ENCODE measurements at regions of chr6 and their contacts with region 1.

Region 1: GRCh38 chr6:121521892-121522664 is 86.6 kb downstream of the GJA1 start:
- DNase-seq: peak; percentile 99
- H3K4me3 ChIP-seq: peak overlapping the region in 1 of 3 experiments; percentile 20
- H3K27ac ChIP-seq: peak overlapping the region; percentile 100
- H3K4me1 ChIP-seq: peaks cover 49% of the 10 kb centered on the region
- H3K27me3 ChIP-seq: no peaks in the 10 kb centered on the region
- CTCF ChIP-seq: no peak
- POLR2A ChIP-seq: peak; percentile 82

Region 2: GRCh38 chr6:121436960-121437850 is 84.9 kb before region 1 on chr6:
- CTCF ChIA-PET with region 1: interaction called, 41 read pairs
- POLR2A ChIA-PET with region 1: interaction called, 94 read pairs
- dilution Hi-C with region 1: no loop called
- intact Hi-C with region 1: loop called (anchors 1 kb)
- DNase-seq: peak; percentile 82
- H3K4me3 ChIP-seq: peak overlapping the region; percentile 94 to 100 (median 100)
- H3K27ac ChIP-seq: peak overlapping the region; percentile 99
- H3K4me1 ChIP-seq: peaks cover 31% of the 10 kb centered on the region
- H3K27me3 ChIP-seq: no peaks in the 10 kb centered on the region
- CTCF ChIP-seq: no peak
- POLR2A ChIP-seq: peak; percentile 60

Region 3: DNA sequence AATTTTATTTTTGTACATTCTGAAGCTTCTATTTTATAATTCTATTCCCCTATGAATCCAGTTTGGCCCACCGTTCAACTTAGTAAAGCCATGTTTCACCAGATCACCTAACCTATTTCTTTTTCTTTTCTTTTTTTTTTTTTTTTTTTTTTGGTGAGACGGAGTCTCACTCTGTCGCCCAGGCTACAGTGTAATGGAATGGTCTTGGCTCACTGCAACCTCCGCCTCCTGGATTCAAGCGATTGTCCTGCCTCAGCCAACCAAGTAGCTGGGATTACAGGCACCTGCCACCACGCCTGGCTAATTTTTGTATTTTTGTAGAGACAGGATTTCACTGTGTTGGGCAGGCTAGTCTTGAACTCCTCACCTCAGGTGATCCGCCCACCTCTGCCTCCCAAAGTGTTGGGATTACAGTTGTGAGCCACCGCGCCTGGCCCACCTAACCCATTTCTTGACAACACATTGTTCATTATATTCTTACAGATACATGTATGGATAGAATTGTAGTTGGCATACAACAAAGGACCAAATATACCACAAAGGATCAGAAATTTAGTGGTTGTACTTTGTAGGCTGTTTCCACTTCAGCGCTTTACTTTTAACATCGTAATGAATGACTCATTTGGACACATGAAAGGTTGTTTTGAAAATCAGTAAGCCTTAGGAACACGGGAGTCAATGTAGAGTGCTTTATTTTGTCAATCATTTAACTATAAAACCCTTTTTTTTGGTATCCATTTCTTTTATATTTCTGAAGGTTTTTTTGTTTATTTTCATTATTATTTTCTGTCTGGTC is 23.4 kb before region 1 on chr6:
- CTCF ChIA-PET with region 1: no interaction called
- POLR2A ChIA-PET with region 1: no interaction called
- dilution Hi-C with region 1: no loop called
- intact Hi-C with region 1: no loop called
- DNase-seq: no peak
- H3K4me3 ChIP-seq: no peak overlapping the region
- H3K27ac ChIP-seq: no peak overlapping the region
- H3K4me1 ChIP-seq: peaks cover 3% of the 10 kb centered on the region
- H3K27me3 ChIP-seq: no peaks in the 10 kb centered on the region
- CTCF ChIP-seq: no peak
- POLR2A ChIP-seq: no peak

Region 4: DNA sequence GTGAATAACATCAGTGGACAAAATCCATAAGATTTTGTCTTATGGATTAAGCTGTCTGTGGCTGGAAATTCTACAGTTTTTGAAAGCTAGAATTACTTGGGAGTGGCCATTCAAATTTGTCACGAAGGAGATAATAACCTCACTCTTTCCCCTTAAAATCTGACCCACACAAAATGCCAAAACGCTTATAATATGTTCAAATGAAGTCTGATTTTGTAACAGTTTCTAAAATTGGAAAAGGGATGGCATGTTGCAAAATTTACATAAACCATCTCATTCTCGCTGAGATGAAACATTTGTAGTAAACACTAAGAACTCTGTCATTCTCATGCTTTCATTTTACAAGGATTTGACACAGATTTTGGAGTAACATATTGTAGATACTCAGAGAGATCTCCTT is 26.1 kb after region 1 on chr6:
- CTCF ChIA-PET with region 1: interaction called, 6 read pairs
- POLR2A ChIA-PET with region 1: no interaction called
- dilution Hi-C with region 1: no loop called
- intact Hi-C with region 1: loop called (anchors 1 kb)
- DNase-seq: no peak
- H3K4me3 ChIP-seq: no peak overlapping the region
- H3K27ac ChIP-seq: no peak overlapping the region
- H3K4me1 ChIP-seq: peaks cover 9% of the 10 kb centered on the region
- H3K27me3 ChIP-seq: no peaks in the 10 kb centered on the region
- CTCF ChIP-seq: no peak
- POLR2A ChIP-seq: no peak

Region 5: DNA sequence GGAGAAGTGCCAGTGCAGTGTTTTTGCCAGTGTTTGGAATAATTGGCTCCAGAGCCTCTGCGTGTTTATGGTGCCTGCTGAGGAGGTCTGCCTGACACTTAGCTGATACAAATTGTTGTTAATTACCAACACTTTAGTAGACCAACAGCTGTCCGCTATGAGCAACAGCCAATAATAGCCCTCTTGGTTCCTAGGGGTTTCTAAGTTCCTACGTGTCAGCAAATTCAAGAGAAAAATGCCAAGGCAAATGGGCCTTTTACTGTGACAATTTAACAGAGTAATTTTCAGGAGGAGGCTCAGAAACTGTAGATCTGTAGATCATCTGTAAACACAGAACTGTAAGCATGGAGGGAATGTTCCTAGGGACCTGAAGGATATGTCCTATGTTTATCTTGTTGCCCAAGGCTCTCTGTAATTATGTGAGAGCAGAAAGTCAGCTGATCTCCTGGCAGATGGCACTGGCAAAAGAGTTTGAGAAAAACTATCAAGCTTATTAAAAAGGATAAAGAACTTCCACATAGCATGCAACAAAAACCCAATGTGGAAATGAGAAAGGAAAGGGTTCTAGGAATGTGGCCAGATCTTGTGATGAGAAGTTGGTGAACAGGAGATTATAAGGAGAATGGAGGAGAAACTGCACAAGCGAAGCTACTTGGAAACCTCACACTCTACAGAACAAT is 71.1 kb after region 1 on chr6:
- CTCF ChIA-PET with region 1: no interaction called
- POLR2A ChIA-PET with region 1: no interaction called
- dilution Hi-C with region 1: no loop called
- intact Hi-C with region 1: no loop called
- DNase-seq: no peak
- H3K4me3 ChIP-seq: no peak overlapping the region
- H3K27ac ChIP-seq: no peak overlapping the region
- H3K4me1 ChIP-seq: no peaks in the 10 kb centered on the region
- H3K27me3 ChIP-seq: no peaks in the 10 kb centered on the region
- CTCF ChIP-seq: no peak
- POLR2A ChIP-seq: no peak

Region 6: GRCh38 chr6:121711472-121711871 is 189.4 kb after region 1 on chr6:
- CTCF ChIA-PET with region 1: no interaction called
- POLR2A ChIA-PET with region 1: no interaction called
- dilution Hi-C with region 1: no loop called
- intact Hi-C with region 1: loop called (anchors 1 kb)
- DNase-seq: peak; percentile 90
- H3K4me3 ChIP-seq: no peak overlapping the region
- H3K27ac ChIP-seq: no peak overlapping the region
- H3K4me1 ChIP-seq: peaks cover 8% of the 10 kb centered on the region
- H3K27me3 ChIP-seq: no peaks in the 10 kb centered on the region
- CTCF ChIP-seq: no peak
- POLR2A ChIP-seq: no peak

Region 7: DNA sequence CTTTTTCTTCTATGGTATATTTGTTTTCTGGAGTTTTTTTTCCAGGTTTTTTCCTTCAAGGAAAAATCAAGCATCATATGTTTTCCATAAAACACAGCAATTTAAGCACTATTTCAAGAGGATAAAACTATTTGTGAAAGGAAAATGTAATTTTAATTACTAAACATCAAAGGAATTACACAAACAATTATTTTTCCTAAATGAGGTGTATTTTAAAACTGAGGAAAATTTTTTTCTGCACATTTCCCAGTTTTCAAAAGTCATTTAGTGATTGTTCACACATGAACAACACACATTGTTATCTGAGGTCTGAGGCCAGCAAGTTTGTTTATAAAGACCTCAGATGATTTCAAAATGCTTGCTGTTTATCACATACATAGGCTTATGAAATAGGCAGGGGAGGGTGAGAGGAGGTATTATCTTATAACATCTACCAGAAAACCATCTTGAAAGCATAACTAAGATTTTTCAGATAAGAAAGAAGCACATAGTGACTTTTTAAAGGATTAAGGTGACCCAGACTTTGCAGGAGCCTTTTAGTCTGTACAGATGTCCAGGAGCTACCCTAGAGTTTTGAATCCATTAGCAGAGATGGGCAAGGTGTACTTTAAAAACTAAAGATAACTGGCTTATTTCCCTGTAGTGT is 295.0 kb after region 1 on chr6:
- CTCF ChIA-PET with region 1: no interaction called
- POLR2A ChIA-PET with region 1: no interaction called
- dilution Hi-C with region 1: no loop called
- intact Hi-C with region 1: loop called (anchors 2 kb)
- DNase-seq: no peak
- H3K4me3 ChIP-seq: no peak overlapping the region
- H3K27ac ChIP-seq: no peak overlapping the region
- H3K4me1 ChIP-seq: no peaks in the 10 kb centered on the region
- H3K27me3 ChIP-seq: no peaks in the 10 kb centered on the region
- CTCF ChIP-seq: no peak
- POLR2A ChIP-seq: no peak

Region 8: GRCh38 chr6:122033539-122034181 is 511.6 kb after region 1 on chr6:
- CTCF ChIA-PET with region 1: interaction called, 3 read pairs
- POLR2A ChIA-PET with region 1: no interaction called
- dilution Hi-C with region 1: no loop called
- intact Hi-C with region 1: loop called (anchors 1 kb)
- DNase-seq: peak; percentile 69
- H3K4me3 ChIP-seq: no peak overlapping the region
- H3K27ac ChIP-seq: no peak overlapping the region
- H3K4me1 ChIP-seq: no peaks in the 10 kb centered on the region
- H3K27me3 ChIP-seq: no peaks in the 10 kb centered on the region
- CTCF ChIP-seq: peak; percentile 35 to 51
- POLR2A ChIP-seq: no peak

Measured in endothelial cell of umbilical vein (primary cell).